ENCODE measurements at regions of chr12 and their contacts with region 1.

Region 1: DNA sequence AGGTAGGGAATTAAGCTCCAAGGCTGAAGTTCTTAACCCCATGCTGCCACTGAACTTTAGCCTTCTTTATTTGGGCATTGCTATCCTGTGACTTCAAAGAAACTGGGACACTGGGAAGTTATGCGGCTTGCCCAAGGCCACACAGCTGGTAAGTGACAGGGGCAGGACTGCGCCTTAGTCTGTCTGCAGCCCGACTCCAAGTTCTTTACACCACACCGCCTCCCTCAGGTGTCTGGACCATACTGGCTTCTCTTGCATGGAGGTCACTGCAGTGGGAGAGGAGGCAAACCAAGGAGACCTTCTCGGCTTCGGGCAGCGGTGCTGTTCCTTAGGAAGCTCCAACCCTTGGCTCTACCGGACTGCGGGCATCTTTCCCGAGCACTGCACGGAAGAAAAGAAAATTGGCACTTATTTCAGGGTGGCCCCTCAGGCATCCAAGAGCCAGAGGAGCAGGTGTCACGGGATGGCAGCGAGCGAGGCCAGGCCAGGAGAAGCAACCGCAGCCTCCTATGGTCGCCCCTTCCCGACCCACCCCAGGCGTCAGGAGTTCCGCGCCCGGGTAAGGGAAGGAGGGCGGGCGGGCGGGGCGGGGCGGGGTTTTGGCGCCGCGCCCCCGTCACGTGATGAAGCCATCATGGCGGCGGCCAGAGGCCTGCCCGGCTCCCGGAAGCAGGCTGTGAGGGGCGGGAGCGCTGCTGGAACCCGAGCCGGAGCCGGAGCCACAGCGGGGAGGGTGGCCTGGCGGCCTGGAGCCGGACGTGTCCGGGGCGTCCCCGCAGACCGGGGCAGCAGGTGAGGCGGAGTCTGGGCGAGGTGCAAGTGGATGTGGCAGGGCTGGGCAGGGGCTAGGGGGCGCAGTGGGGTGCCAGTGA is 16.4 kb upstream of the ESPL1 start:
- H3K4me3 Mint-ChIP-seq: peak overlapping the region; percentile 99
- H3K27ac Mint-ChIP-seq: peak overlapping the region; percentile 94
- H3K4me1 Mint-ChIP-seq: peaks cover 59% of the 10 kb centered on the region
- H3K27me3 Mint-ChIP-seq: no peaks in the 10 kb centered on the region

Region 2: DNA sequence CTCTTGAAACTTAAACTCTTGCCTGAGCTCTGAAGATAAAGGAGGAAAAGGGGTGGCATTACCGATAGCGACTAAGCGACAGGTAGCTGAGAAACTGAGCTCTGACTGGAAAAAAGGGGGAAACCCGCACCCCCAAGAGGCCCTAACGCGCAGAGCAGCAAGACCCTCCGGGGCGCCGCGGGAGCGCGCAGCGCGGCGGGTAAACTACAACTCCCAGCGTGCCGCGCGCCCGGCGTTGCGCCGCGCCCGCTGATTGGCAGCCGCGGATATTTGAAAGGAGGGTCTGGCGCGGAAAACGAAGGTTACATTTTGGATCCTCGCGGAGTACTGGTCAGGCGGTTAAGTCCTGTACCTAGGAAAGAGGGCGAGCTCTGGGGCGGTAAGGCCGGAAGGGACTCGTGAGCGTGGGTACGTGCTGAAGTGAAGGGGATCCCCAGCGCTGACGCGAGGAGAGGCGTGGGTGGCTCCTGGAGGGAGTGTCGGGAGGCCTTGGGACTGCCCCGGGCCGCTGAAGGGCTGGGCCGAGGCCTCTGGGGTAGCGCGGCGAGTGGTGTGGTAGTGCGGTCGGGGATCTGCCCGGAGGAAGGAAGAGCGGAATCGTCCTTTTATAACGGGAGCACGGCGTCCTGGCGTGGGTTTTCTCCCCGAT is 16.4 kb after region 1 on chr12 and contains the start of gene ESPL1:
- intact Hi-C with region 1: loop called (anchors 1 kb)
- H3K4me3 Mint-ChIP-seq: peak within 1 kb of the TSS; percentile 89
- H3K27ac Mint-ChIP-seq: peak within 1 kb of the TSS; percentile 88
- H3K4me1 Mint-ChIP-seq: peaks cover 58% of the 10 kb centered on the region
- H3K27me3 Mint-ChIP-seq: no peaks in the 10 kb centered on the region

Region 3: DNA sequence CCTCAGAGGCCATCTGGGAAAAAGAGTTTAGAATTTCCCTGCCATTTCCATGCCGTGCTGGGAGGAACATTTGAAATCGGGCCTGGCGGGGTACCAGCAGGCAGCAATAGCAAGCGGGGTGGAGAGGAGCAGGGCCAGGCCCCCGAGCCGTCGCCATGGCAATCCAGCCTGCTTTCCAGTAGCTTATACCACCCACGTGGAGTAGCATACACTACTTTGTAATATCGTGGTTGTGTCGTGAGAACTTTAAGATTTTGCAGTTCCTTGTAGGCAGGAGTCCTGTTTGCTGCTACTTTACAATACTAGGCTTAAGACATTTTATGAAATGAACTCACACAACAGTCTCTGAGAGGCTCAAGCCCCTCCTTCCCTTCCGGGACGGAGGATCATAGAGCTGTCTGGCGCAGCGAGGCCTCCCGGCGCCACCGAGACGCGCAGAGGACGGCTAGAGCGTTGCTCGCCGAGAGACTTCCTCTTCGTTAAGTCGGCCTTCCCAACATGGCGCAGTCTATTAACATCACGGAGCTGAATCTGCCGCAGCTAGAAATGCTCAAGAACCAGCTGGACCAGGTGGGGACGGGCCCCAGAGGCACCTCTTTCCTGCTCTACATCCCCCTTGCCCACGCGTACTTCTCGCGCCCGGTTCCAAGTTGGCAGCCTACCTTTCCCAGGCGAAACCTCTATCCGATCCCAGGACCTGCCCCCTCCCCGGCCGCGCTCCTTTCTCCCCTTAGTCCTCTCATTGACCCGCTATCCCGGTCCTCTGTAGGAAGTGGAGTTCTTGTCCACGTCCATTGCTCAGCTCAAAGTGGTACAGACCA is 43.6 kb after region 1 on chr12 and contains the start of gene PFDN5:
- intact Hi-C with region 1: loop called (anchors 5 kb)
- H3K4me3 Mint-ChIP-seq: peak within 1 kb of the TSS; percentile 94
- H3K27ac Mint-ChIP-seq: peak within 1 kb of the TSS; percentile 92
- H3K4me1 Mint-ChIP-seq: peaks cover 50% of the 10 kb centered on the region
- H3K27me3 Mint-ChIP-seq: no peaks in the 10 kb centered on the region

Region 4: GRCh38 chr12:53862831-53863230 is 611.1 kb after region 1 on chr12:
- intact Hi-C with region 1: no loop called
- H3K4me3 Mint-ChIP-seq: no peak overlapping the region
- H3K27ac Mint-ChIP-seq: no peak overlapping the region
- H3K4me1 Mint-ChIP-seq: no peaks in the 10 kb centered on the region
- H3K27me3 Mint-ChIP-seq: peaks cover 31% of the 10 kb centered on the region